ENCODE measurements at regions of chr16 and their contacts with region 1.

Region 1: GRCh38 chr16:2003827-2004641 is 5.6 kb downstream of the ZNF598 start:
- DNase-seq: peak; percentile 81
- ATAC-seq: peak; percentile 96
- H3K4me3 ChIP-seq: no peak overlapping the region
- H3K27ac ChIP-seq: 0 out of 2 replicates have a peak overlapping the region, but pooled peaks have one; percentile 14
- H3K4me1 ChIP-seq: peaks cover 21% of the 10 kb centered on the region
- H3K27me3 ChIP-seq: no peaks in the 10 kb centered on the region
- CTCF ChIP-seq: peak; percentile 98
- POLR2A ChIP-seq: no peak
- RAD21 ChIP-seq: peak; percentile 61

Region 2: DNA sequence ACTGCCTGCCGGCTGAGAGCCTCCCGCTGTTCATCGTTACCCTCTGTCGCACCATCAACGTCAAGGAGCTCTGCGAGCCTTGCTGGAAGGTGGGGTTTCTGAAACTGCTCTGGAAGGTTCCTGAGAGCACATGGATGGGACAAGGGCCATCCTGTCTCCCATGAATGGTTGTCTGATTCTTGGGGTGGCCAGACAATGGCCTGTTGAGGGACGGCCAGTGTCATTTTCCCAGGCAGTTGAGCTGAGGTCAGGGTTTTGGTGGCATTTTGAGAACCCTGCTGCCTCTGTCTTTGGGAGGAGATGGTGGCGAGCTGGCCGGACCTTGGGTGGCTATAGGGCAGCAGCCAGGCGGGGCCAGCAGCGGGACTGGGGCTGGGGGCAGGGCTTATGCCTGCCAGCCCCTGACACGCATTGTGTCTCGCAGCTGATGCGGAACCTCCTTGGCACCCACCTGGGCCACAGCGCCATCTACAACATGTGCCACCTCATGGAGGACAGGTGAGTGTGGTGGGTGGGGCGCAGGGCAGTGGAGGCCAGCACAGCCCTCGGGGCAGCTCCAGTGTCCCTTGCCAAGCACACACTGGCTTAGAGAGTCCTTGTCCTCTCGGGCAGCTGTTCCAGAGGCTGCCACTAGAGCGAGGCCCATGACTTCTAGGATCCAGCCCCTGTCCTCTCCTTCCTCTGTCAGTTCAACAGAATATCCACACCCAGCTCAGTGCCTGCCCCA is 52.8 kb after region 1 on chr16:
- CTCF ChIA-PET with region 1: no interaction called
- POLR2A ChIA-PET with region 1: no interaction called
- dilution Hi-C with region 1: no loop called
- in situ Hi-C with region 1: no loop called
- intact Hi-C with region 1: no loop called
- DNase-seq: no peak
- ATAC-seq: no peak
- H3K4me3 ChIP-seq: no peak overlapping the region
- H3K27ac ChIP-seq: no peak overlapping the region
- H3K4me1 ChIP-seq: no peaks in the 10 kb centered on the region
- H3K27me3 ChIP-seq: no peaks in the 10 kb centered on the region
- CTCF ChIP-seq: no peak
- POLR2A ChIP-seq: no peak
- RAD21 ChIP-seq: no peak

Region 3: GRCh38 chr16:2142942-2143877 is 139.2 kb after region 1 on chr16:
- CTCF ChIA-PET with region 1: interaction called, 5 read pairs
- POLR2A ChIA-PET with region 1: no interaction called
- dilution Hi-C with region 1: no loop called
- in situ Hi-C with region 1: no loop called
- intact Hi-C with region 1: loop called (anchors 5 kb)
- DNase-seq: no peak
- ATAC-seq: no peak
- H3K4me3 ChIP-seq: no peak overlapping the region
- H3K27ac ChIP-seq: no peak overlapping the region
- H3K4me1 ChIP-seq: peaks cover 5% of the 10 kb centered on the region
- H3K27me3 ChIP-seq: no peaks in the 10 kb centered on the region
- CTCF ChIP-seq: no peak
- POLR2A ChIP-seq: no peak
- RAD21 ChIP-seq: no peak